OCI-LY7 (cell line): ENCODE measurements at regions of chr5 and their contacts with region 1.

Region 1: GRCh38 chr5:137822158-137822764 is 45.4 kb upstream of the MYOT start:
- DNase-seq: peak; percentile 18
- H3K4me3 ChIP-seq: no peak overlapping the region
- H3K27ac ChIP-seq: no peak overlapping the region
- H3K4me1 ChIP-seq: no peaks in the 10 kb centered on the region
- CTCF ChIP-seq: peak; percentile 65

Region 2: GRCh38 chr5:137778772-137779564 is 43.3 kb before region 1 on chr5:
- CTCF ChIA-PET with region 1: interaction called, 3 read pairs
- POLR2A ChIA-PET with region 1: no interaction called
- intact Hi-C with region 1: loop called (anchors 1 kb)
- DNase-seq: peak; percentile 51
- H3K4me3 ChIP-seq: no peak overlapping the region
- H3K27ac ChIP-seq: no peak overlapping the region
- H3K4me1 ChIP-seq: no peaks in the 10 kb centered on the region
- CTCF ChIP-seq: peak; percentile 88

Region 3: DNA sequence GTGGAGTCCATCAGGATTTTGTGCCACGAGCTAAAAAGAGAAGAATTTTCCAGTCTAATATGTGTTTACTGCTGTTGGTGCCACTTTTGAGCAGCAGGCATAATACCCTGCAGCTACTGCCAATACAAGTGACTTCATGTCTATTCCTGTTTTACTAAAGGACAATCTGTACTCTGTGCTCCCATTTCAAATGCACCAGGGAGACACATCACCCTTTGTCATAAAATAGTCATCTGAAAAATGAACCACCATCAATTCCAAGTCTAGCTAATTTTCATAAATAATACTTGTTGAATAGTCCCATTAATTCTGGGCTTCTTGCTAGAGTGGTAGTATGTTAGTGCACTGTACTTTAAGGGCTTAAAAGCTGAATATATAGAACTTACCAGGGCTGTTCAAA is 58.1 kb after region 1 on chr5:
- CTCF ChIA-PET with region 1: no interaction called
- POLR2A ChIA-PET with region 1: no interaction called
- intact Hi-C with region 1: no loop called
- DNase-seq: no peak
- H3K4me3 ChIP-seq: no peak overlapping the region
- H3K27ac ChIP-seq: no peak overlapping the region
- H3K4me1 ChIP-seq: no peaks in the 10 kb centered on the region
- CTCF ChIP-seq: no peak